ENCODE measurements at regions of chr14 and their contacts with region 1.

Region 1: DNA sequence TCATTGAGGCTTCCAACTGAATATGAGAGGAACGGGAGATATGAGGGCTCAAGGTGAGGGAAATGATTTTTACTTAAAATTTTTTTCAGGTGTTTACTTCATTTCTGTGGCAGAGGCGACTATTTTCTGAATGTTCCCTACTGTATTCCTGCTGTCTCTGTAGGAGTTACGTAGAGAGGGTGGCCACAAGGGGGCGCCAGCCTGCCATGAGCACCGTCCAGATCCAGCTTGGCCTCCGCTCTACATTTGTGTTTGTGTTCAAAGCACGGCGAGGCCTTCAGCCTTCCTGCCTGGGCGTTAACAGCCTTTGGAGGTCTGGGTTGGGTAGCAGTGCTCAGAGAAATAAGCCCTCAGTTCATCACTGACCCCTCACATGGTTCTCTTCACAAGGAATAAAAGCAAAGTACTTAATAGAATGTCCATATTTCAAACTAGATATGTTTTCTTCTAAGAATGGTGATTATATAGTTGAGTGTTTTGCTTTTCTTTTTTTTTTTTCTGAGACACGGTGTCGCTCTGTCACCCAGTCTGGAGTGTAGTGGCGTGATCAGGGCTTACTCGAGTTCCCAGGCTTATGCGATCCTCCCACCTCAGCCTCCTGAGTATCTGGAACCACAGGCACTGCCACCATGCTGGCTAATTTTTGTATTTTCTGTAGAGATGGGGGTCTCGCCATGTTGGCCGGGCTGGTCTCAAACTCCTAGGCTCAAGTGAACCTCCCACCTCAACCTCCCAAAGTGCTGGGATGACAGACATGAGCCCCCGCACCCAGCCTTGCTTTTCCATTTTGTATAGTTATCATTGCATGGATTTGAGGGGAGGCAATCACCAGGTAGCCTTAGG is 22.3 kb downstream of the CKB start:
- DNase-seq: peak; percentile 28
- H3K4me3 ChIP-seq: no peak overlapping the region
- CTCF ChIP-seq: peak; percentile 91

Region 2: GRCh38 chr14:103444837-103445524 is 55.4 kb before region 1 on chr14:
- CTCF ChIA-PET with region 1: no interaction called
- POLR2A ChIA-PET with region 1: no interaction called
- DNase-seq: peak; percentile 47
- H3K4me3 ChIP-seq: no peak overlapping the region
- CTCF ChIP-seq: no peak

Region 3: DNA sequence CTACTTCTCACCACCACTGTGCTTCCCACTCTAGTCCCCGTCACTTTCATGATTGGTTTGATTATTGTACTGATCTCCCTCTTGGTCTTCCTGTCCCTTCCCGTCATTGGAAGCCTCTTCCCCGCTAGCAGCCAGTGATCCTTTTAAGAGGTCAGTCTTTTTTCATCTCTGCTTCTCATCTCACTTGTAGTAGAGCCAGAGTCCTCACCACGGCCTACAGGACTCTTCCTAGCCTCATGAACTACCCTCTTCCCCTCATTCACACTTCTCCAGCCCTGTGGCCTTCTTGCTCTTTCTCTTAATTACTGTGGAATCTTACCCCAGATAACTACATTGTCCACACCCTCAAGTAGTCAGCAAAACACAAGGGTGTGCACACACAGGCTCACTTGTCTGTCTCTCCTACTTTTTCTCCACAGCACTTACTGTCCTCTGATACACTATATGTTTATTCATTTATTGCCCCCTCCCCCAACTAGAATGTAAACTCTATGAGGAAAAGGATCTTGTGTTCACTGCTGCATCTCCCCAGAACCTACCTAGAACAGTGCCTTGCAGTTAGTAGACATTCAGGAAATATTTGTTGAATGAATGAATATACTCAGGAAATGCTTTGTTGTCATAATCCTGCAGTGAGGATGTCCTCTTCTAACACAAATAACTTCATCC is 44.1 kb before region 1 on chr14:
- CTCF ChIA-PET with region 1: interaction called, 10 read pairs
- POLR2A ChIA-PET with region 1: no interaction called
- DNase-seq: no peak
- H3K4me3 ChIP-seq: no peak overlapping the region
- CTCF ChIP-seq: no peak

Region 4: DNA sequence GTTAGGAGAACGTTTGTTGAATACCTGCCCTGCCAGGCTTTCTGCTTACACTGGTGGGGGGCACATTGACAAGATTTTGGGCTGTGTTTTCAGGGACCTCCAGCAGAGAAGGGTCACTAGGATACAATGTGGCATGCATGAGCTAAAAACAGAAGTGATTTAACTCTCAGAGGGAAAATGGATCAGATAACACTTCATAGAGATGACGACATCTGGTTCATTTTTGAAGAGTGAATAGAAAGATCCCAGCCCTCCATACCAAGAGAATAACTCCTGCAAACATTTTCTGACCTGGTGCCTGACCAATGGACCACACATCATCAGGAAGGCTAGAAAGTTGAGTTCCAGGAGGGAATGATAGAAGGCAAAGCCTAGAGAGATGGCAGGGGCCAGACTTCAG is 11.4 kb before region 1 on chr14:
- CTCF ChIA-PET with region 1: interaction called, 57 read pairs
- POLR2A ChIA-PET with region 1: no interaction called
- DNase-seq: peak; percentile 26
- H3K4me3 ChIP-seq: no peak overlapping the region
- CTCF ChIP-seq: no peak

Region 5: GRCh38 chr14:103520657-103521437 is 20.5 kb after region 1 on chr14:
- CTCF ChIA-PET with region 1: interaction called, 61 read pairs
- POLR2A ChIA-PET with region 1: no interaction called
- DNase-seq: no peak
- H3K4me3 ChIP-seq: peak overlapping the region; percentile 46
- CTCF ChIP-seq: peak; percentile 69

Region 6: DNA sequence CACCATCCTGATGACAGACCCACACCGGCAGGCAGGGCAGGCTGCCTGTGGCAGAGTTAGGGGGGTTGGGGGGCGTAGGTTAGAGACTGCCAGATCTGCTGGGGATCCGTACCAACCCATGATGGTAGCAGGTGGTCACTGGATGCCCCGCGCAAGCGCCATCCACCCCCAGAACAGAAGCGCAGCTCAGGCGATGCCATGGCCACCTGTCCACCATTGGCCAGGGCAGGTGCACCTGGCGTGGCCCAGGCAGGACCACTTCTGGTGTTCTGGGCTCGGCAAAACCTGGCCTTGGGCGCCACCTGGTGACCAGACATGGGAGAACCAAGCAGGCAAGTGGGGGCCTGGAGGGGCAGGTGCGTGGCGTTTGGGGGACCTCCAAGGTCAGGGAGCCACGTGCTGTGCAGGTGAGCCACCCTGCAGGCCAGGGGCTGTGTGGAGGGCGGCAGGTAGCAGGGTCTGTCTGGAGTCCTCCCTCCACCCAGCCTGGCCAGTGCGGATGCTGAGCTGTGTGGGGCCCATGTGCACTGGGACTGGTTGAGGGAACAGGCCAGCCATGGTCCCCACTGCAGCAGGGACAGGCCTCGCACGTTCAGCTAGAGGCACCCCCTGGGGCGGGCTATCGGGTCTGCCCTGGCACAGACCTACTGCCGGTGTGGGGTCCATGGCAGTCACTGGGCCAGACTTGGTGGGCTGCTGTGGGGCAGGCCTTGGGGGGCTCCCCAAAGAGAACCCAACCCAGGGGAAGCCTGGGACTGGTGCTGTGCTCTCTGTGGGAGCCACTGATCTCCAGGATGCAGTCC is 46.5 kb after region 1 on chr14:
- CTCF ChIA-PET with region 1: interaction called, 175 read pairs
- POLR2A ChIA-PET with region 1: no interaction called
- DNase-seq: no peak
- H3K4me3 ChIP-seq: no peak overlapping the region
- CTCF ChIP-seq: peak; percentile 92

Region 7: DNA sequence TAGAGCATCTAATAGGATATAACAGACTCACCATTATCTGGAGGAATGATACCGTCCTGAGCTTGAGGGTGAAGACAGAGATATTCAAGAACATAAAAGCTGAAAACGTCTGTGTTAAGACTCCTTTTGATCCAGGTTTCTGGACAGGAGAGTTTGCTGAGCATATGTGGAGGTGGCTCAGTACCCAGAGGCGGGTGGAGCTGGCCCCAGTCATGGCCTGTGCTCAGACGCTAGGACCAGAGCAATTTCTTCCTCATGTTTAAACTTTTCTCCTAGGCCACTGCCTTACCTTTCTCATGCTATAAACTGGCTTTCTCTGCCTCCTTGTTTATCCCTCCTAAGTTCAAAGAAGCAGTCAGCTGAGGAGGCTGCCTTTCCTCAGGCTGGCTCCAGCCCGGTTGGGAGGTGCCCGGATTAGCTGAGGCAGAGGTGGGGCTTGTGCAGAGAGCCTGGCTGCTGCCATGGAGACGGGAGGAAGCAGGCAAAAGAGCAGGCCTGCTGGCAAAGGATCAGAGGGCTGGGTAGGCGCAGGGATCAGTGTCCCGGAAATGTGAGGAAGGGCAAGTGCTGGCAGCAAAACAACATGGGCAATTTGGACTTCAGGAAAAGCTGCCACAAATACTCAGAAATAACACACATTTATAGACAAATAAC is 76.1 kb after region 1 on chr14:
- CTCF ChIA-PET with region 1: no interaction called
- POLR2A ChIA-PET with region 1: no interaction called
- DNase-seq: no peak
- H3K4me3 ChIP-seq: no peak overlapping the region
- CTCF ChIP-seq: no peak

Region 8: DNA sequence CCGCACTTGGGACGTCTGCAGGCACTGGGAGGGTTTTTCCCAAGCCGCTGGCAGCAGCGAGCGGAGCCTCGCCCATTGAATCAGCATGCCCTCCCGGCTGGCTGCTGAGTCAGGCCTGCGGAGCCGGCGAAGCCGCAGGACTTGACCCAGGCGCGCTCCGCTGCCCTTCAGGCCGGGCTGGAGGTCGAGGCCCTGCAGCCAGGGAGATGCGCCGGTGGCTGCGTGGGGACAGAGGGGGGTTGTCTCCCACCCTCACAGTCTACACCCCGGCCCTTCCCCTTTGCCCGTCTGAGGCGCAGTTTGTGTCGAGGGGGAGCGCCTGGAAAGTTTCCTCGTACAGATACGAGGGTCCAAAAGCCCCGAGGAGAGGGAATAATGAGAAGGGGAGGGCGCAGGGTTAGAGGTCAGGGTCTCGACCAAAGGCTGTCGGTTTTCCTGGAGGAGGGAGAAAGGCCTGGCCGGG is 127.9 kb after region 1 on chr14:
- CTCF ChIA-PET with region 1: no interaction called
- POLR2A ChIA-PET with region 1: no interaction called
- DNase-seq: no peak
- H3K4me3 ChIP-seq: peak overlapping the region; percentile 73
- CTCF ChIP-seq: no peak

Measured in AG04449 (cell line).